ENCODE measurements at regions of chr11 and their contacts with region 1.

Region 1: GRCh38 chr11:45354976-45355705 is 69.0 kb upstream of the SYT13 start:
- DNase-seq: peak; percentile 94 to 96 (median 95)
- H3K4me3 ChIP-seq: peak overlapping the region; percentile 22 to 70 (median 37)
- H3K27ac ChIP-seq: no peak overlapping the region
- H3K4me1 ChIP-seq: peaks cover 0 to 9% (median 5%) of the 10 kb centered on the region in 4 experiments
- H3K27me3 ChIP-seq: peaks cover 0 to 8% (median 2%) of the 10 kb centered on the region in 5 experiments

Region 2: GRCh38 chr11:45305874-45306623 is 49.1 kb before region 1 on chr11:
- CTCF ChIA-PET with region 1: no interaction called
- POLR2A ChIA-PET with region 1: no interaction called
- DNase-seq: peak in 1 of 3 donors; percentile 11
- H3K4me3 ChIP-seq: no peak overlapping the region
- H3K27ac ChIP-seq: no peak overlapping the region
- H3K4me1 ChIP-seq: peaks cover 0 to 7% (median 2%) of the 10 kb centered on the region in 4 experiments
- H3K27me3 ChIP-seq: no peaks in the 10 kb centered on the region

Region 3: GRCh38 chr11:45339729-45340519 is 15.2 kb before region 1 on chr11:
- CTCF ChIA-PET with region 1: interaction called, 11 read pairs
- POLR2A ChIA-PET with region 1: no interaction called
- DNase-seq: peak; percentile 88 to 92 (median 90)
- H3K4me3 ChIP-seq: peak overlapping the region in 5 of 7 experiments; percentile 9 to 72 (median 16)
- H3K27ac ChIP-seq: no peak overlapping the region
- H3K4me1 ChIP-seq: peaks cover 0 to 10% (median 4%) of the 10 kb centered on the region in 4 experiments
- H3K27me3 ChIP-seq: peaks cover 0 to 7% (median 0%) of the 10 kb centered on the region in 5 experiments

Region 4: DNA sequence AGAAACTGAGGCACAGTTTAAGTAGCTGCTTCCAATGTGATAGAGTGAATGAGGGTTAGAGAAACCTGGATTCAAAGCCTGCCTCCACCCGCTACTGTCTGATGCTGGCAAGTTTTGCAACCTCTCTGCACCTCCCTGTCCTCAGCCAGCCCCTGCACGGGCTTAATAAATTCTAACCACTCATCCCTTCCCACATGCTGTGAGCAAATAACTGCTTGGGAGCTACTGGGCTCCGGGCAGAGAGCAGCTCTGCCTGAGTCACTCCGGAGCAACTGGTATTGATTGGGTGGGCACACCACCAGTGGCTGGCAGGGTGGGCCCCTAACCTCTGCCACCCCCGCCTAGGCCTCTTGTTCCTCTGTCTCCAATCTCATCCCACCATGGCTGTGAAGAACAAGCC is 35.3 kb after region 1 on chr11:
- CTCF ChIA-PET with region 1: no interaction called
- POLR2A ChIA-PET with region 1: no interaction called
- DNase-seq: no peak
- H3K4me3 ChIP-seq: no peak overlapping the region
- H3K27ac ChIP-seq: no peak overlapping the region
- H3K4me1 ChIP-seq: peaks cover 0 to 4% (median 0%) of the 10 kb centered on the region in 4 experiments
- H3K27me3 ChIP-seq: peaks cover 0 to 52% (median 24%) of the 10 kb centered on the region in 5 experiments

Measured in common myeloid progenitor, CD34-positive (primary cell).